T-cell (primary cell): ENCODE measurements at regions of chr20 and their contacts with region 1.

Region 1: GRCh38 chr20:62921119-62921687 is 5.1 kb downstream of the DIDO1 start:
- DNase-seq: peak in 32 of 35 experiments; percentile 32 to 80 (median 50)
- ATAC-seq: peak; percentile 35 to 58 (median 38)
- H3K4me3 ChIP-seq: no peak overlapping the region
- H3K4me3 Mint-ChIP-seq: peak overlapping the region; percentile 65 to 84 (median 76)
- H3K27ac ChIP-seq: peak overlapping the region; percentile 64
- H3K27ac Mint-ChIP-seq: peak overlapping the region; percentile 83 to 87
- H3K4me1 ChIP-seq: peaks cover 69 to 80% of the 10 kb centered on the region in 2 experiments
- H3K4me1 Mint-ChIP-seq: peaks cover 84 to 86% (median 84%) of the 10 kb centered on the region in 3 donors
- H3K27me3 ChIP-seq: no peaks in the 10 kb centered on the region
- H3K27me3 Mint-ChIP-seq: no peaks in the 10 kb centered on the region

Region 2: DNA sequence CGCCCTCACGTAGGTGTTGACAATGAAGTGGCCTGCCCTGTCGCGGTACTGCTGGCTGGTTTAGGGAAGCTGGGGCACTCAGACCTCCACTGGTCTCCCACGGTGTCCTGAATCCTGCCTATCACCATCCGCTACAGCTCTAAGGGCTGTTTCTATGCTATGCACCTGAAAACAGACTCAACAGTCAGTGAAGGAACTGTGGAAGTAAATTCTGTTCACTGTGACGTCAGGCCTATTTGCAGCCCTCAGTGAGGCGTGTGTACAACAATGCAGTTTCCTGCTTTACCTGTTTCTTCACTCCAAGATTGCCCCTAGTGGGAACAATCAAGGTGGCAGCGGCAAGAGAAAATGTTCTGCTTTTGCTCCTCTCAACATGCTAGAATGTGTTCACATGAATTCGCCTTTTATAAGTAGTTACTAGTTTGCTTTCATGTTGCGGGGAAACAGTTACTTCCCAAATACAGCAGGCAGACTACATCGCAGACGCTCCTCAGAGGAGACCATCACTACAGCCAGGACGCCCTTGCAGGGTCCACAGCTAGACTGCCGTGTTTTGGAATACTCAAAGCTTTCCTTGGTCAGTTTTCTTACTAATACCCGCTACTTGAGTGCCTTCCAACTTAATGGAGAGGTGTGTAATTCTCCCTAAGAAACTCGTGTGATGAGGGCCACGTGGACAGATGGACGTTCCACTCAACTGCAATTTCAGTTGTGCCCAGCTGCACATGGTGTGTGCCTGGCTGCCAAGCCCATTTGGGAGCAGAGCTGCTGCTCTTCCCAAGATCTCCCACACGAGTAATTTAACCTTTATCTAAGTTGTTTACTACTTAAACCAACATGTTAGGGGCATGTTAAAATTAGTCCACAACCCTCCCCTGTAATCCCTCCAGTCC is 20.3 kb before region 1 on chr20:
- CTCF ChIA-PET with region 1: interaction called, 5 to 12 read pairs
- POLR2A ChIA-PET with region 1: interaction called in 1 of 2 experiments, 8 read pairs
- DNase-seq: peak in 22 of 35 experiments; percentile 16 to 65 (median 34)
- ATAC-seq: peak; percentile 25 to 69 (median 34)
- H3K4me3 ChIP-seq: no peak overlapping the region
- H3K4me3 Mint-ChIP-seq: peak overlapping the region in 1 of 3 donors; percentile 63
- H3K27ac ChIP-seq: peak overlapping the region; percentile 48
- H3K27ac Mint-ChIP-seq: peak overlapping the region; percentile 79 to 83
- H3K4me1 ChIP-seq: peaks cover 3 to 24% of the 10 kb centered on the region in 2 experiments
- H3K4me1 Mint-ChIP-seq: peaks cover 28 to 39% (median 36%) of the 10 kb centered on the region in 3 donors
- H3K27me3 ChIP-seq: no peaks in the 10 kb centered on the region
- H3K27me3 Mint-ChIP-seq: no peaks in the 10 kb centered on the region

Region 3: GRCh38 chr20:62907384-62908317 is 13.6 kb before region 1 on chr20:
- CTCF ChIA-PET with region 1: interaction called, 4 to 11 read pairs
- POLR2A ChIA-PET with region 1: interaction called in 1 of 2 experiments, 3 read pairs
- DNase-seq: peak in 19 of 35 experiments; percentile 16 to 64 (median 40)
- ATAC-seq: peak; percentile 47 to 81 (median 64)
- H3K4me3 ChIP-seq: no peak overlapping the region
- H3K4me3 Mint-ChIP-seq: no peak overlapping the region
- H3K27ac ChIP-seq: no peak overlapping the region
- H3K27ac Mint-ChIP-seq: peak overlapping the region in 1 of 2 donors; percentile 16
- H3K4me1 ChIP-seq: peaks cover 0 to 11% of the 10 kb centered on the region in 2 experiments
- H3K4me1 Mint-ChIP-seq: peaks cover 27 to 36% (median 31%) of the 10 kb centered on the region in 3 donors
- H3K27me3 ChIP-seq: no peaks in the 10 kb centered on the region
- H3K27me3 Mint-ChIP-seq: no peaks in the 10 kb centered on the region